HCT116 (cell line): ENCODE measurements at regions of chr16 and their contacts with region 1.

Region 1: GRCh38 chr16:48687421-48688038 is 77.5 kb upstream of the N4BP1 start:
- DNase-seq: peak; percentile 60
- ATAC-seq: peak; percentile 100
- H3K4me3 ChIP-seq: no peak overlapping the region
- H3K27ac ChIP-seq: no peak overlapping the region
- H3K4me1 ChIP-seq: no peaks in the 10 kb centered on the region
- H3K27me3 ChIP-seq: peaks cover 16% of the 10 kb centered on the region
- CTCF ChIP-seq: peak; percentile 59 to 75 (median 65); a peak in 5 of 6 replicates
- POLR2A ChIP-seq: no peak
- RAD21 ChIP-seq: peak; percentile 81

Region 2: GRCh38 chr16:49000594-49000993 is 313.1 kb after region 1 on chr16:
- CTCF ChIA-PET with region 1: no interaction called
- POLR2A ChIA-PET with region 1: no interaction called
- RAD21 ChIA-PET with region 1: no interaction called
- intact Hi-C with region 1: loop called (anchors 5 kb)
- DNase-seq: peak; percentile 26
- ATAC-seq: peak; percentile 89
- H3K4me3 ChIP-seq: no peak overlapping the region
- H3K27ac ChIP-seq: no peak overlapping the region
- H3K4me1 ChIP-seq: peaks cover 0 to 3% of the 10 kb centered on the region in 2 experiments; a peak in 1 of 4 replicates
- H3K27me3 ChIP-seq: no peaks in the 10 kb centered on the region
- CTCF ChIP-seq: peak; percentile 38 to 87 (median 87); a peak in 5 of 6 replicates
- POLR2A ChIP-seq: no peak
- RAD21 ChIP-seq: peak; percentile 54